Common myeloid progenitor, CD34-positive (primary cell): ENCODE measurements at regions of chr2 and their contacts with region 1.

Region 1: DNA sequence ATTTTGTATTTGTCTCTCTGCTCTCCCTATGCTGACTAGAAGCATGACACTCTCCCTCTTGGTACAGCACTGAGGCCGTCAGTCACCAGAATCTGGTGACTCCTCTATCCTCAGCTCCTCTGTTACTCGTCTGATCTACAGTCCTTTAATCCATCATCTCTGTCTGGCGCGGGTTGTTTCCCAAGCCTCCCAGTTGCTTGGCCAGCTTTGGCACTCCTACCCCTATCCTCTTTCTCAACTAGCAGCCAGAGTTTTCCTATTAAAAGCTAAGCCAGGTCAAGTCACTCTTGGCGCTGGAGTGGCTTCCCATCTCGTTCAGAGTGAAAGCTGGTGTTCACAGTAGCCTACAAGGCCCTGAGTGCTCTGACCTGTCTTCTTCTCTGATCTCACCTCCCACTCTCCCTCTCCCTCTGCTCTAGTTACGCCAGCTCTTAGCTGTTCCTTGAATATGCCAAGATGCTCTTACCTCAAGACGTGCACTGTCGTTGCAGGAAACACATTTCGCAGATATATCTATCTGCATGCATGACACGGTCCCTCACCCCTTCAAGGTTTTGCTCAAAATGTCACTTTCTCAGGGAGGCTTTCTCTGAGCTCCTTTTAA is 41.8 kb upstream of the PSME4 start:
- DNase-seq: no peak
- H3K4me3 ChIP-seq: no peak overlapping the region
- H3K27ac ChIP-seq: no peak overlapping the region
- H3K4me1 ChIP-seq: peaks cover 0 to 20% (median 12%) of the 10 kb centered on the region in 4 experiments
- H3K27me3 ChIP-seq: no peaks in the 10 kb centered on the region

Region 2: DNA sequence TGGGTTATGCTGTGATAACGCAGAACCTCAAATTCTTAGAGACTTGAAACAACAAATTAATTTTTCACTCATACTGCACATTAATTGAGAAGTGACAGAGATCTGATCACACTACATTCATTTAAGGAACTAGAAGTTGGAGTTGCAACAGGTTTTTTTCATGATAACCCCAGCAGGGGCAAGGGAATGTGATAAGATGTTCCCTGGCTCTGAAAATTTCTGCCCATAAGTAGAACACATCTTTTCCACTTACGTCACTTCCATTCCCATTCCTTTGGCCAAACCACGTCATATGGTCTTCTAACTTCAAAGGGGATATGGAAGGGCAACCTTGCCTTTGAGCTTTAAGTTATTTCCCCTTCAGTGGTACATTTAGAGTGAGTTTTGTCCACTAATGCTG is 12.1 kb before region 1 on chr2:
- CTCF ChIA-PET with region 1: interaction called, 14 read pairs
- POLR2A ChIA-PET with region 1: interaction called, 4 read pairs
- DNase-seq: peak; percentile 46 to 76 (median 64)
- H3K4me3 ChIP-seq: no peak overlapping the region
- H3K27ac ChIP-seq: peak overlapping the region; percentile 15 to 67
- H3K4me1 ChIP-seq: peaks cover 1 to 38% (median 18%) of the 10 kb centered on the region in 4 experiments
- H3K27me3 ChIP-seq: no peaks in the 10 kb centered on the region

Region 3: GRCh38 chr2:54139210-54139609 is 126.6 kb after region 1 on chr2:
- CTCF ChIA-PET with region 1: no interaction called
- POLR2A ChIA-PET with region 1: no interaction called
- DNase-seq: no peak
- H3K4me3 ChIP-seq: no peak overlapping the region
- H3K27ac ChIP-seq: no peak overlapping the region
- H3K4me1 ChIP-seq: no peaks in the 10 kb centered on the region
- H3K27me3 ChIP-seq: no peaks in the 10 kb centered on the region